Gastrocnemius medialis (tissue), 4 donors: ENCODE measurements at regions of chr3 and their contacts with region 1.

Region 1: DNA sequence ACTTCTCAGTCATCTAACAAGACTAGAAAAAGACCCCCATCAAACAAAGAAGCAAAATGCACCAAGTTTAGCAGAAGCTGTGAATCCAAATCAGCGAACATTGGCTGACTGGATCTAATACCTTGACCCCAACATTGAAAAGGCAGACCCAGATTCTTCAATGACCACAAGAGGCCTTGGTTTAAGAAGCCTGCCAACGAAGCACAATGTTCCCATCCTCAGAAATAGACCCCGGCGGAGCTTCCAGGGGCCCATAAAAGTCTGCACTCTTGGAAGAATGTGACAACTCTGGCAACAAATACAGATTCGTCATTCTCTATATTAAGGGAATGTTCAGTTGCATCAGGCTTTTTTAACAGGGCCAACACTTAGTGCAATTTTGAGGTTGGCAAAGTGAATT is 112.8 kb upstream of the BCL6 start:
- DNase-seq: peak; percentile 69 to 84
- ATAC-seq: peak; percentile 89 to 91
- H3K4me3 ChIP-seq: no peak overlapping the region
- H3K27ac ChIP-seq: peak overlapping the region; percentile 74 to 87 (median 80)
- H3K4me1 ChIP-seq: peaks cover 25 to 37% of the 10 kb centered on the region in 2 donors
- H3K27me3 ChIP-seq: no peaks in the 10 kb centered on the region
- CTCF ChIP-seq: no peak
- POLR2A ChIP-seq: no peak

Region 2: DNA sequence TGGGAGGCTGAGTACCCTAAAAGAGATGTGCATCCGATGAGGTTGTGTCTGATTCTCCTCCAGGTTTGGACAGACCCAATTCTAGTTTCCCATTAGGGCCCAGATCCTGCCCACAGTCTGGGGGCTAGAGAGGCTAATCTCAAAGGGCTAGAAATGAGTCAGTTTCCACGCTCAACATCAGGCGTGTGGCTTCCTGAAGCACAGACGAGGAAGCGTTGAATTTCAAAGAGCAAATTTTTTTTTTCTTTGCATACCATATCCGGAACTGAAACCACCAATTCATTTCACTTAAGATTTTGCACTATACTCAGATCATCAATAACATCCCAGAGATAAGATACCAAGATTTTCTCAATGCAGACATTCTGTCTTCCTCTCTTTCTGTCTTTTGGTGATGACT is 61.0 kb after region 1 on chr3:
- in situ Hi-C with region 1: no loop called
- intact Hi-C with region 1: loop called (anchors 1 kb)
- DNase-seq: no peak
- ATAC-seq: no peak
- H3K4me3 ChIP-seq: no peak overlapping the region
- H3K27ac ChIP-seq: peak overlapping the region in 3 of 4 donors; percentile 35 to 80 (median 79)
- H3K4me1 ChIP-seq: peaks cover 33 to 38% of the 10 kb centered on the region in 2 donors
- H3K27me3 ChIP-seq: no peaks in the 10 kb centered on the region
- CTCF ChIP-seq: no peak
- POLR2A ChIP-seq: no peak

Region 3: GRCh38 chr3:187955076-187955952 is 97.3 kb after region 1 on chr3:
- in situ Hi-C with region 1: no loop called
- intact Hi-C with region 1: loop called (anchors 5 kb)
- DNase-seq: peak; percentile 43 to 85
- ATAC-seq: peak; percentile 68 to 70
- H3K4me3 ChIP-seq: no peak overlapping the region
- H3K27ac ChIP-seq: peak overlapping the region; percentile 83 to 96 (median 94)
- H3K4me1 ChIP-seq: peaks cover 58 to 79% of the 10 kb centered on the region in 2 donors
- H3K27me3 ChIP-seq: no peaks in the 10 kb centered on the region
- CTCF ChIP-seq: no peak
- POLR2A ChIP-seq: no peak

Region 4: DNA sequence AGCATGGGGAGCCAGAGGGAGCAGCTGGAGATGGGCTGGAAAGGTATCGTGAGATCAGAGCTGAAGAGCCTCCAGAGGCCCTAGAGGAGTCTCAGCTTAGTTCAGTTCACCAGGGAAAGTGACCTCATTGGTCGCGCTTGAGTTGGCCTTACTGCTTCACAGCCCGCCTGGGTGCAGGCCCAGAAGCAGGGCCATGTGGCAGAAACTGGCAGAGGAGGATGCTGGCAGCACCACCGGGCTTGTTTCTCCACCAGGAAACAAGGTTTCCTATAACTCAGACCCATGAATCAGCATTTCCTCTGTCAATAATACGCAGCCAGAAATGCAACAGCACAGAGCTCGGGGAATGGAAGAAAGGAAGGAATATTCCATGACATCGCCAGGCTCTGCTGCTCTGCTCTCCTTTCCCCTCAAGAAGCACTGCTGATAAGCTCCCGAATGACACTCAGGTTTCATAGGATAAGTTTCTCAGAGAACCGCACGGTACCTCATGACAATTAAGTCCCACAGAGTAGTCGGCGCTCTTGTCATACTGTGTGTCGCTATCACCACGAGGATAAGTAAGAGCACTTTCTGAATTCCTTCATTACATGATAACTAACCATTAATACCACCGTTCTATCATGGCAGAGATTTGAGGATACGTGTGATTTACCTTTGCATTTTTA is 148.8 kb after region 1 on chr3:
- in situ Hi-C with region 1: no loop called
- intact Hi-C with region 1: loop called (anchors 5 kb)
- DNase-seq: peak; percentile 87 to 97
- ATAC-seq: peak; percentile 86 to 90
- H3K4me3 ChIP-seq: peak overlapping the region; percentile 12 to 42 (median 26)
- H3K27ac ChIP-seq: peak overlapping the region; percentile 88 to 97 (median 90)
- H3K4me1 ChIP-seq: peaks cover 9 to 18% of the 10 kb centered on the region in 2 donors
- H3K27me3 ChIP-seq: no peaks in the 10 kb centered on the region
- CTCF ChIP-seq: peak in 2 of 5 experiments; percentile 4 to 23
- POLR2A ChIP-seq: peak; percentile 36 to 72

Region 5: GRCh38 chr3:188154014-188154808 is 296.2 kb after region 1 on chr3 and contains the start of gene LPP:
- in situ Hi-C with region 1: no loop called
- intact Hi-C with region 1: loop called (anchors 5 kb)
- DNase-seq: peak; percentile 53 to 76
- ATAC-seq: peak; percentile 60 to 70
- H3K4me3 ChIP-seq: peak within 1 kb of the TSS; percentile 61 to 96 (median 83)
- H3K27ac ChIP-seq: peak within 1 kb of the TSS; percentile 93 to 98 (median 98)
- H3K4me1 ChIP-seq: peaks cover 44 to 54% of the 10 kb centered on the region in 2 donors
- H3K27me3 ChIP-seq: no peaks in the 10 kb centered on the region
- CTCF ChIP-seq: no peak
- POLR2A ChIP-seq: peak; percentile 78 to 80
- total RNA-seq, gene LPP: 56.0 to 65.7 (median 58.1) TPM